ENCODE measurements at regions of chr10 and their contacts with region 1.

Region 1: GRCh38 chr10:37976091-37976879 is at the start of gene ZNF25:
- DNase-seq: peak; percentile 98
- H3K4me3 Mint-ChIP-seq: peak within 1 kb of the TSS; percentile 91
- H3K27ac Mint-ChIP-seq: peak within 1 kb of the TSS; percentile 91
- H3K4me1 Mint-ChIP-seq: peaks cover 22% of the 10 kb centered on the region
- H3K27me3 Mint-ChIP-seq: no peaks in the 10 kb centered on the region
- total RNA-seq, gene ZNF25: 7.0 TPM

Region 2: GRCh38 chr10:37857287-37858211 is 118.7 kb before region 1 on chr10 and contains the start of gene ZNF248:
- CTCF ChIA-PET with region 1: interaction called, 3 read pairs
- POLR2A ChIA-PET with region 1: interaction called, 13 read pairs
- DNase-seq: peak; percentile 95
- H3K4me3 Mint-ChIP-seq: peak within 1 kb of the TSS; percentile 78
- H3K27ac Mint-ChIP-seq: peak within 1 kb of the TSS; percentile 85
- H3K4me1 Mint-ChIP-seq: peaks cover 34% of the 10 kb centered on the region
- H3K27me3 Mint-ChIP-seq: no peaks in the 10 kb centered on the region
- total RNA-seq, gene ZNF248: 8.1 to 9.1 TPM

Region 3: DNA sequence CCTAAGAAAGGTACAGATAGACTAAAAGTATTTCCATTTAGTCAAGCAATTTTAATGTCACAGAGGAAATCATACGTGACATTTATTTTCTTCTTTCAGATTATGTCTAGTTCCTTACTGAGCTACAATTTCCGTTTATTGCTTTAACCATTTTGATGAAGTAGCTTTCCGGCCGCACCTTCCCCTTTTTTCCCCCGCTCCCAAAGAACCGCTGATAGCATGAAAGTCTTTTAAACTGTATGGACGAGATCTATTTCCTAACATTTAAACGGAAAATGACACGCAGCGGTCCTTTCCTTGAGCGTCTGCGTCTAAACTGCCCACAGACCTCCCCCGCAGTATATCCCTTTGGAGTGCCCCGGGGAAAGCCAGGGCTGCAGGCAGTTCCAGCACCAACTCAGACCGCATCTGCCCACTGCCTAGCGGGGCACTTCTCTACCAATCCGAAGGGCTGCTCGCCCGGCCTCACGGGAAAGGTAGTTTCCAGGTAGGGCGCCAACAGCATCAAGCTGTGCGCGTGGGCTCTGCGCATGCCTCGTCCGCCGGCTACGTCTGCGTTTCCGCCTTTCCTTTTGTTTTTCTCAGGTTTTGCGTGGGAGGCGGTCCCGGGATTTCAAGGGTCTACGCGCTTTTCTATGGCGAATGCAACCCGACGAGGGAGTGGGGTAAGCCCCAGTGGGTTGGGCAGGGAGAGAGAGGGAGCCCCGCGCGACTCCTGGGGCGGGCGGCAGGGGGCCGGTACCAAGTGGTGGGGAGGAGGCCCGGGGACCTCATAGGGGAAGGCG is 34.0 kb after region 1 on chr10 and contains the start of gene ZNF33A:
- CTCF ChIA-PET with region 1: interaction called, 39 read pairs
- POLR2A ChIA-PET with region 1: interaction called, 28 read pairs
- DNase-seq: peak; percentile 89
- H3K4me3 Mint-ChIP-seq: peak within 1 kb of the TSS; percentile 92
- H3K27ac Mint-ChIP-seq: peak within 1 kb of the TSS; percentile 98
- H3K4me1 Mint-ChIP-seq: peaks cover 34% of the 10 kb centered on the region
- H3K27me3 Mint-ChIP-seq: no peaks in the 10 kb centered on the region
- total RNA-seq, gene ZNF33A: 31.6 to 31.7 TPM

Region 4: DNA sequence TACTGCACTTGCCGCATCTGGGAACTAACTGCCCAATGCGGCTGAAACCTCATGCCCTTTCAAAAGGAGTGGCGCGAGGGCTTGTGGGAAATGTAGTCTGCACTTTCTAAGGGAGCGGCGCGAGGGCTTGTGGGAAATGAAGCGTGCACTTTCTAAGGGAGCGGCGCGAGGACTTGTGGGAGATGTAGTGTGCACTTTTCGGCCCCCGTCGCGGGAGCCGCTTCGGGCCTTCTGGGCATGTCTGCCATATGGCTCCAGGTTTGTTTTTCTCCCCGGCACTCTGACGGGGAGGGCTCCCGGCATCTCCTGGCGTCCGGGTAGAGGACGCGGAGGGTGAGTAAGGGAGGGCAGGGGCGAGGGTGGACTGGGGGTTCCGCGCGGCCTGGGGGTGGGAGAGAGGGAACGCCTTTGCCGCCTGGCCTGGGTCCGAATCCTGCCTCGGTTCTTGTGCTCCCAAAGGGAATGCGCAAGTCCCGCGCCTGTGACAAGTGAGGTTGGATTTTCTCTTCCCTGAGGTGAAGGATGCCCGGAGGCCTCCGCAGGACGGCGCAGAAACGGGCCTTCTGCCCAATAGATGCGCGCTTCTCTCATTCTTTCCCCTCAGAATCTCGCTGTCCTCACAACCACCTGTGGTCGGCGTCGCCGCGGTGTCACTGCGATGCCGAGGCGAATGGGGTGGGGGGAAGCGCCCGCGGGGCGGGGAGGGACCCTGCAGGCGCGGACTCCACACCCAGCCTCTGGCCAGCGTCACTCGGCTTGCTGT is 118.1 kb after region 1 on chr10 and contains the start of gene ZNF37A:
- CTCF ChIA-PET with region 1: interaction called, 9 read pairs
- POLR2A ChIA-PET with region 1: interaction called, 23 read pairs
- DNase-seq: peak; percentile 92
- H3K4me3 Mint-ChIP-seq: peak within 1 kb of the TSS; percentile 83
- H3K27ac Mint-ChIP-seq: peak within 1 kb of the TSS; percentile 85
- H3K4me1 Mint-ChIP-seq: peaks cover 30% of the 10 kb centered on the region
- H3K27me3 Mint-ChIP-seq: no peaks in the 10 kb centered on the region
- total RNA-seq, gene ZNF37A: 17.9 to 19.6 TPM